ENCODE measurements at regions of chr17 and their contacts with region 1.

Region 1: GRCh38 chr17:78865682-78866390 is 25.2 kb upstream of the USP36 start:
- DNase-seq: no peak
- H3K4me3 ChIP-seq: peak overlapping the region in 1 of 4 donors; percentile 18
- H3K27ac ChIP-seq: peak overlapping the region in 3 of 4 donors; percentile 21 to 60 (median 43)
- H3K4me1 ChIP-seq: peaks cover 0 to 51% (median 14%) of the 10 kb centered on the region in 3 donors
- H3K27me3 ChIP-seq: no peaks in the 10 kb centered on the region
- CTCF ChIP-seq: peak; percentile 82 to 91 (median 86)
- POLR2A ChIP-seq: no peak

Region 2: DNA sequence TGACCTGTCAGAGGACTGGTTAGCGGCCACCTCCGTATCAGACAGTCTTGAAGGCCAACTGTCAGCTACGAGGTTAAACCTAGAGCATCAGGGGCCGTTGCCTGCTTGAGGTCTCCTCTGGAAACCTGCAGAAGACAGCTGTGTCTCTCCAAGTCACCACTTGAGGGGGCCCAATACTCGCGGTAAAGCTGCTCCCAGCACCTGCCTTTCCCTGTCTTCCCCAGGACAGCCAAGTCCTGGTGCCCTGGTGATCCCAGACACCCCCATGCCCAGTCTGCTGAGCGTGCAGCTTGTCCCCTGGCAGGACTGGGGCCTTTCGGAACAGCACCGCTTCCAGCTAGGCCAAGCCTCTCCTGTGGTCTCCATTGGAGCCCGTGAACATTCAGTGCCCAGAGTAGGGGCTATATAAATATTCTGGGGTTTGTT is 368.7 kb before region 1 on chr17:
- intact Hi-C with region 1: no loop called
- DNase-seq: no peak
- H3K4me3 ChIP-seq: no peak overlapping the region
- H3K27ac ChIP-seq: no peak overlapping the region
- H3K4me1 ChIP-seq: peaks cover 0 to 14% (median 0%) of the 10 kb centered on the region in 3 donors
- H3K27me3 ChIP-seq: peaks cover 0 to 4% (median 0%) of the 10 kb centered on the region in 4 donors
- CTCF ChIP-seq: peak; percentile 47 to 86 (median 70)
- POLR2A ChIP-seq: no peak

Region 3: GRCh38 chr17:78970834-78971773 is 105.3 kb after region 1 on chr17:
- intact Hi-C with region 1: loop called (anchors 5 kb)
- DNase-seq: peak; percentile 20
- H3K4me3 ChIP-seq: peak overlapping the region in 1 of 4 donors; percentile 35
- H3K27ac ChIP-seq: peak overlapping the region in 2 of 4 donors; percentile 36 to 59
- H3K4me1 ChIP-seq: peaks cover 24 to 57% (median 30%) of the 10 kb centered on the region in 3 donors
- H3K27me3 ChIP-seq: no peaks in the 10 kb centered on the region
- CTCF ChIP-seq: peak; percentile 77 to 89 (median 87)
- POLR2A ChIP-seq: no peak

Measured in esophagus squamous epithelium (tissue), 5 donors.